ENCODE measurements at regions of chr6 and their contacts with region 1.

Region 1: GRCh38 chr6:156776840-156777576 is at the start of gene ARID1B:
- DNase-seq: peak; percentile 75 to 90 (median 85)
- H3K4me3 ChIP-seq: peak within 1 kb of the TSS; percentile 61
- H3K4me3 Mint-ChIP-seq: peak within 1 kb of the TSS; percentile 88 to 99 (median 98)
- H3K27ac ChIP-seq: peak within 1 kb of the TSS; percentile 81
- H3K27ac Mint-ChIP-seq: peak within 1 kb of the TSS; percentile 95 to 99 (median 98)
- H3K4me1 ChIP-seq: peaks cover 14% of the 10 kb centered on the region
- H3K4me1 Mint-ChIP-seq: peaks cover 30 to 44% (median 34%) of the 10 kb centered on the region in 3 donors
- H3K27me3 ChIP-seq: no peaks in the 10 kb centered on the region
- H3K27me3 Mint-ChIP-seq: no peaks in the 10 kb centered on the region
- total RNA-seq, gene ARID1B: 53.0 to 57.9 TPM

Region 2: GRCh38 chr6:156686995-156687788 is 89.8 kb before region 1 on chr6:
- CTCF ChIA-PET with region 1: interaction called, 10 read pairs
- POLR2A ChIA-PET with region 1: interaction called, 66 read pairs
- DNase-seq: peak; percentile 65 to 86 (median 80)
- H3K4me3 ChIP-seq: peak overlapping the region; percentile 84
- H3K4me3 Mint-ChIP-seq: peak overlapping the region; percentile 84 to 93 (median 89)
- H3K27ac ChIP-seq: peak overlapping the region; percentile 90
- H3K27ac Mint-ChIP-seq: peak overlapping the region; percentile 77 to 99 (median 95)
- H3K4me1 ChIP-seq: peaks cover 7% of the 10 kb centered on the region
- H3K4me1 Mint-ChIP-seq: peaks cover 14 to 23% (median 21%) of the 10 kb centered on the region in 3 donors
- H3K27me3 ChIP-seq: no peaks in the 10 kb centered on the region
- H3K27me3 Mint-ChIP-seq: peaks cover 6 to 9% of the 10 kb centered on the region in 2 donors

Region 3: DNA sequence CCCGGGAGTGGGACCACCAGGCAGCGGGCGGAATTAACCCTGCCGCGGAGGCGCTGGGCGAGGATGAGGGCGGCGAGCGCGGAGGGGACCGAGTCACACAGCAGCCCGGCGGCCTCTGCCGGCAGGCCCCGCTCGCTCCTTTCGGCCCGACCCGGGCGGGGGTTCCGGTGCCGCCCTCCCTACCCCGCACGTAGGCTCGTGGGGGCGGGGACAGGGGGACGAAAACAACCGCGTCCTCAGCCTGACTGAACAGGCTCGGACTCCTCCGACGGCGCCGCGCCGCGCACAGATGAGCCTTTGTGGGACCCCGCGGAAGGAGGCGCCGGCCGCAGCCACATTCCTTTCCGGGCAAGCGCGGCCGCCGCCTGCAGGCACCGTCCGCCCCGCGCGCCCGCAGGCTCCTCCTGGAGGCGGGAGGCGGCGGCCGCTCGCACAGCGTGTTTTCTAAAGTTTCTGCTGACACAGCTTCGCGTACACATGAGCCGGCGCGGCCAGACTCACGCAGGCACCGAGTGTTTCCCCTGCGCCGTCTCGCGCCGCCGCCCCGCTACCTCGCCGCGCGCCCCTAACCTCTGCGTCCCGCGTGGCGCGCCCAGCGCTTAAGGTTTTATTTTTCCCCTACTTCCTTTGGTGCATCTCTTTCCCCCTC is 244.5 kb after region 1 on chr6:
- CTCF ChIA-PET with region 1: interaction called, 3 read pairs
- POLR2A ChIA-PET with region 1: interaction called, 42 read pairs
- DNase-seq: peak; percentile 83 to 93 (median 89)
- H3K4me3 ChIP-seq: peak overlapping the region; percentile 82
- H3K4me3 Mint-ChIP-seq: peak overlapping the region; percentile 90 to 96 (median 95)
- H3K27ac ChIP-seq: peak overlapping the region; percentile 97
- H3K27ac Mint-ChIP-seq: peak overlapping the region; percentile 94 to 100 (median 99)
- H3K4me1 ChIP-seq: peaks cover 15% of the 10 kb centered on the region
- H3K4me1 Mint-ChIP-seq: peaks cover 39 to 69% (median 68%) of the 10 kb centered on the region in 3 donors
- H3K27me3 ChIP-seq: no peaks in the 10 kb centered on the region
- H3K27me3 Mint-ChIP-seq: peaks cover 0 to 4% of the 10 kb centered on the region in 2 donors

Measured in CD8-positive, alpha-beta memory T cell (primary cell).